Heart left ventricle (tissue), 16 donors: ENCODE measurements at regions of chr11 and their contacts with region 1.

Region 1: GRCh38 chr11:102346748-102347461 is at the start of gene BIRC2:
- DNase-seq: peak; percentile 95 to 98 (median 96)
- ATAC-seq: peak; percentile 91 to 98 (median 98)
- H3K4me3 ChIP-seq: peak within 1 kb of the TSS; percentile 56 to 94 (median 87)
- H3K27ac ChIP-seq: peak within 1 kb of the TSS; percentile 95 to 100 (median 98)
- H3K4me1 ChIP-seq: peaks cover 0 to 38% (median 30%) of the 10 kb centered on the region in 12 donors
- H3K27me3 ChIP-seq: no peaks in the 10 kb centered on the region
- CTCF ChIP-seq: peak; percentile 64 to 88 (median 76)
- POLR2A ChIP-seq: peak; percentile 54 to 79
- total RNA-seq, gene BIRC2: 24.1 to 39.9 (median 32.7) TPM

Region 2: GRCh38 chr11:101914738-101915426 is 432.0 kb before region 1 on chr11 and contains the start of gene CEP126:
- intact Hi-C with region 1: loop called in 1 of 10 experiments (anchors 5 kb)
- DNase-seq: peak; percentile 93 to 97 (median 95)
- ATAC-seq: peak; percentile 93 to 99 (median 98)
- H3K4me3 ChIP-seq: peak within 1 kb of the TSS; percentile 48 to 82 (median 72)
- H3K27ac ChIP-seq: peak within 1 kb of the TSS; percentile 52 to 86 (median 74)
- H3K4me1 ChIP-seq: peaks cover 0 to 27% (median 7%) of the 10 kb centered on the region in 12 donors
- H3K27me3 ChIP-seq: no peaks in the 10 kb centered on the region
- CTCF ChIP-seq: peak; percentile 15 to 75 (median 40)
- POLR2A ChIP-seq: peak in 1 of 2 donors; percentile 17
- total RNA-seq, gene CEP126: 0.82 to 1.8 (median 1.1) TPM

Region 3: DNA sequence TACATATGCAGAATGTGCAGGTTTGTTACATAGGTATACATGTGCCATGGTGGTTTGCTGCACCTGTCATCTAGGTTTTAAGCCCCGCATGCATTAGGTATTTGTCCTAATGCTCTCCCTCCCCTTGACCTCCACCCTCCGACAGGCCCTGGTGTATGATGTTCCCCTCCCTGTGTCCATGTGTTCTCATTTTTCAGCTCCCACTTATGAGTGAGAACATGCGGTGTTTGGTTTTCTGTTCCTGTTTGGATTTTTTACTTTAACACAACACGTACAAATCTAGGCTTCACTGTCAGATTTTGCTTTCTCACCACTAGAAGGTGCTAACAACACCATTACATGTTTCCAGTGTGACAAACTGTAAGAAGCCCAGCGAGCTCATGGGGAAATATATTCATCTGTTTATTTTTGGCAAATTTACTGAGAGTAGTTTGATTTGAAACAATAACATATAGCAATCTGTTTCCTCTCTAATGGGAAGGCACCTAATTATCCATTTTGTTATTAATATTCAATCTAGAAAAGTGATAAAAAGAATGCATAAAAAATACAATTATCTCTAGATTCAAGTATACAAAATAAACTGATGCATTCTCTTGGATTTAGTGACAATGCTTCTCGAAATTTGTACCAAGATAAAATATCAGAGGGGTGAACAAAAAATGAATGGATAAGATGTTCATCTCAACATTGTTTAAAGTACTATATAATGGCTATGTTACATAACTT is 52.9 kb before region 1 on chr11:
- intact Hi-C with region 1: loop called in 7 of 10 experiments (anchors 2 to 10 kb)
- DNase-seq: no peak
- ATAC-seq: peak in 3 of 4 donors; percentile 44 to 75 (median 44)
- H3K4me3 ChIP-seq: peak overlapping the region in 2 of 12 donors; percentile 7 to 41
- H3K27ac ChIP-seq: no peak overlapping the region
- H3K4me1 ChIP-seq: peaks cover 0 to 34% (median 0%) of the 10 kb centered on the region in 12 donors
- H3K27me3 ChIP-seq: no peaks in the 10 kb centered on the region
- CTCF ChIP-seq: peak; percentile 21 to 70 (median 58)
- POLR2A ChIP-seq: no peak

Region 4: GRCh38 chr11:102451681-102452460 is 105.0 kb after region 1 on chr11:
- intact Hi-C with region 1: loop called in 5 of 10 experiments (anchors 2 to 10 kb)
- DNase-seq: peak; percentile 55 to 81 (median 64)
- ATAC-seq: peak; percentile 63 to 87 (median 76)
- H3K4me3 ChIP-seq: peak overlapping the region; percentile 69 to 96 (median 84)
- H3K27ac ChIP-seq: peak overlapping the region; percentile 6 to 94 (median 85)
- H3K4me1 ChIP-seq: peaks cover 0 to 64% (median 18%) of the 10 kb centered on the region in 12 donors
- H3K27me3 ChIP-seq: no peaks in the 10 kb centered on the region
- CTCF ChIP-seq: peak in 5 of 12 donors; percentile 10 to 43 (median 25)
- POLR2A ChIP-seq: no peak

Region 5: DNA sequence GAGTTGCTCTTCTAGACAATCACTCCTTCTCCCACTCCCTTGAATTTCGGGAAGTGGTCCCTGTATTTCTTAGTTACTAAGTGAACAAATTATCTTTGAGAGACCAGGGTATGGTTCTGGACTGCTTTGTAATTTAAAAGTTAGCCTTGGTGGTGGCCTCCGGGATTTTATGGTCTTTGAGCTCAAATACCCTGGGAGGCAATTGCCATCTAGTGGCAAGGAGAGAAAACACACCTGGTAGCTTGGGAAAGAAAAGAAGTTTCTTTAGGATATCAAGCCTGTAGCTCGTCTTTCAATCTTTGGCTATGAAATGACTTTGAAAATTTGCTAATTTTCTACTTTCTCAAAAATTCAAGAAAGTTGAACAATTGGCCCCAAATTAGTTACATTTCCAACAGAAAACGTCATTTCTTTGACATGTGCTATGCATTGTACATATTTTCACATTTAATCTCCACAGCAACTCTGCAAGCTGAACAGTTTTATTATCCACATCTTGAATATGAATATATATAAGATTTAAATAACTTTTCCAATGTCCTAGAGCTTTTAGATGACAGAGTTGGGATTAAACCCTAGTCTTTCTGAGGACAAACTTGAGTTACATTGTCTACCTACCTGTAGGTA is 319.5 kb after region 1 on chr11:
- intact Hi-C with region 1: loop called in 4 of 10 experiments (anchors 5 to 10 kb)
- DNase-seq: no peak
- ATAC-seq: no peak
- H3K4me3 ChIP-seq: no peak overlapping the region
- H3K27ac ChIP-seq: no peak overlapping the region
- H3K4me1 ChIP-seq: no peaks in the 10 kb centered on the region
- H3K27me3 ChIP-seq: no peaks in the 10 kb centered on the region
- CTCF ChIP-seq: peak; percentile 37 to 74 (median 60)
- POLR2A ChIP-seq: no peak